ENCODE measurements at regions of chr20 and their contacts with region 1.

Region 1: GRCh38 chr20:13771853-13772453 is 12.8 kb downstream of the ESF1 start:
- DNase-seq: peak in 2 of 5 donors; percentile 6 to 42
- H3K4me3 ChIP-seq: no peak overlapping the region
- H3K27ac ChIP-seq: no peak overlapping the region
- H3K4me1 ChIP-seq: no peaks in the 10 kb centered on the region
- H3K27me3 ChIP-seq: no peaks in the 10 kb centered on the region
- CTCF ChIP-seq: peak; percentile 20

Region 2: GRCh38 chr20:13121840-13122515 is 650.0 kb before region 1 on chr20:
- intact Hi-C with region 1: loop called (anchors 10 kb)
- DNase-seq: no peak
- H3K4me3 ChIP-seq: no peak overlapping the region
- H3K27ac ChIP-seq: no peak overlapping the region
- H3K4me1 ChIP-seq: no peaks in the 10 kb centered on the region
- H3K27me3 ChIP-seq: no peaks in the 10 kb centered on the region
- CTCF ChIP-seq: no peak